Left ventricle myocardium superior (tissue), 1 donor: ENCODE measurements at regions of chr10 and their contacts with region 1.

Region 1: DNA sequence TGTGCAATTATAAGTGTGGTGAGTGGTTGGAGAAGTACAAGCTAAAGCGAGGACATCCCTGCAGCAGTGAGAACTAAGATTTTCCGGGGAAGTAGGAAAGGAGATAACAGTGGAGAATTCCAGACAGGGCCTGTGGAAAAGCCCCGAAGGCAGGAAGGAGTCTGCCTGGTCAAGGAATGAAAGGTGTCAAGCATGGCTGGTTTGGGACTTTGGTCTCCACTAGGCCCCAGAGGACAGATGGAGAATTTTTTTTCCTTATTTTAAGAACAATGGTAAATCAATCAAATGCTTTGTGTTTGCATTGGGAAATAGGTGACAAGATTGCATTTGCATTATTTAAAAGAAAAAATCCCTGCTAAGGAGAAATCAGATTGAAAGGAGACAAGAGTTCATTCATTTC is 3.2 kb upstream of the CEP55 start:
- DNase-seq: no peak
- ATAC-seq: no peak

Region 2: GRCh38 chr10:93261961-93262610 is 231.1 kb before region 1 on chr10:
- intact Hi-C with region 1: no loop called
- DNase-seq: no peak
- ATAC-seq: no peak

Region 3: GRCh38 chr10:93368210-93368609 is 125.0 kb before region 1 on chr10:
- intact Hi-C with region 1: loop called (anchors 5 kb)
- DNase-seq: peak; percentile 38
- ATAC-seq: peak; percentile 73